ENCODE measurements at regions of chr3 and their contacts with region 1.

Region 1: DNA sequence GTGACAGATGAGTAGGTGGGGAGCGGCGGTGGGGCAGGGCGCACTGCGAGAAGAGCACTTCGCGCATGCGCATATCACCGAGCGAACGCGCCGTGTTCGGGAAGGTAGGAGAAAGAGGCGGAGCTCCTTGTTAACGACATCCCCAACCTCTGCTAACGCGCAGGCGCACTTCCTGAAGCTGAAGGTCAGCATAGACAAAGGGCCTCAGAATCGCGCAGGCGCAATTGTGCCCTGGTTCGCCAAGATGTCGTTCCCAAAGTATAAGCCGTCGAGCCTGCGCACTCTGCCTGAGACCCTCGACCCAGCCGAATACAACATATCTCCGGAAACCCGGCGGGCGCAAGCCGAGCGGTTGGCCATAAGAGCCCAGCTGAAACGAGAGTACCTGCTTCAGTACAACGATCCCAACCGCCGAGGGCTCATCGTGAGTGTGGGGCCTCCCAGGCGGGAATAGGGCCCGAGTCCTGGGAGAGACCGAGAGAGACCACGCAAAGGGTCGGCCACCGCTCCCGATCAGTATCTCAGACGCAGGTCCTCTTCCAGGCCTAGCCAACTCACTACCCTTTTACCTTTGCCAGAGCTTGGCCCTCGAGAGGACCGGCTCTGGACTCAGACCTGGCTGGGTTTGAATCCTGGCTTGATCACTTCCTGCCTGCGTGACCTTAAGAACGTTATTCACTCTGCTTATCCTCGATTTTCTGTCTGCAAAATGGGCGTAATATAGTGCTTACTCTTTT is at the start of gene NDUFB4:
- DNase-seq: peak; percentile 99
- H3K4me3 ChIP-seq: peak within 1 kb of the TSS; percentile 62 to 88 (median 76)
- H3K27ac ChIP-seq: peak within 1 kb of the TSS; percentile 89 to 94 (median 90)
- H3K4me1 ChIP-seq: peaks cover 0 to 46% (median 38%) of the 10 kb centered on the region in 4 donors
- H3K27me3 ChIP-seq: no peaks in the 10 kb centered on the region
- CTCF ChIP-seq: no peak
- EP300 ChIP-seq: peak in 1 of 4 donors; percentile 50
- POLR2A ChIP-seq: peak; percentile 78 to 86
- total RNA-seq, gene NDUFB4: 72.3 to 148 (median 113) TPM

Region 2: DNA sequence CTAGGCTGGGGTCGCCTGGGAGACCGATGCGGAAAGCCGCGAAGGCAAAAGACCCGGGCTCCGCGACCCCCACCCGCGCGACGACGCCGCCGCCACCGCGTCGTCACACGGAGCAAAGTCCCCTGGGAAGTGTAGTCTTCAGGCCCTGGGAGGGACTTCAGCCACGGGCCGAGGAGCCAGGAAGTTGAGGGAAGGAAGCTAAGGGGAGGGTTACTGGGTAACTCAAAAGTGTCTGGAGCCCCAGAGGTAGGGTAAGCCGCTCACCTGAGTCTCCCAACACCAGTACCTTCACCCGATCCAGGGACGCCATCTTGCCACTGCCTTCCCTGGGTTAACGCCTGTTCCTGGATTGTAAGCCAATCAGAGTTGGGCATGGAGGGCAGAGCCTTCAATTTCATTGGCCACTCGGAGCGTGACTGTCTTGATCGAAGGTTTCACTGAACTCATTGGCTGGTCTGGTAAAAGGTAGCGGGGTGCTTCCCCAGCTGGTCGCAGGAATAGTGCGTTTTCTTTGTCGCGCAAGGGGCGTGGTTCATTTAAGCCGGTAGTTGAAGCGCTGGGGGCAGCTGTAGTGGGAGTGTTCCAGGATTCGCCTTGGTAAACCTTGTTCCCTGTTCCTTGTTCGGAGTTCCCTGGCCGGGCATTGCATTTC is 146.0 kb after region 1 on chr3 and contains the starts of genes GTF2E1 and RABL3:
- intact Hi-C with region 1: loop called (anchors 5 kb)
- DNase-seq: peak; percentile 98
- H3K4me3 ChIP-seq: peak within 1 kb of the TSS; percentile 79 to 94 (median 87)
- H3K27ac ChIP-seq: peak within 1 kb of the TSS; percentile 89 to 93 (median 92)
- H3K4me1 ChIP-seq: peaks cover 0 to 19% (median 10%) of the 10 kb centered on the region in 4 donors
- H3K27me3 ChIP-seq: no peaks in the 10 kb centered on the region
- CTCF ChIP-seq: no peak
- EP300 ChIP-seq: peak in 1 of 4 donors; percentile 27
- POLR2A ChIP-seq: peak; percentile 45 to 49
- total RNA-seq, gene GTF2E1: 6.9 to 12.5 (median 10.3) TPM
- total RNA-seq, gene RABL3: 9.4 to 13.2 (median 12.6) TPM